ENCODE measurements at regions of chr7 and their contacts with region 1.

Region 1: DNA sequence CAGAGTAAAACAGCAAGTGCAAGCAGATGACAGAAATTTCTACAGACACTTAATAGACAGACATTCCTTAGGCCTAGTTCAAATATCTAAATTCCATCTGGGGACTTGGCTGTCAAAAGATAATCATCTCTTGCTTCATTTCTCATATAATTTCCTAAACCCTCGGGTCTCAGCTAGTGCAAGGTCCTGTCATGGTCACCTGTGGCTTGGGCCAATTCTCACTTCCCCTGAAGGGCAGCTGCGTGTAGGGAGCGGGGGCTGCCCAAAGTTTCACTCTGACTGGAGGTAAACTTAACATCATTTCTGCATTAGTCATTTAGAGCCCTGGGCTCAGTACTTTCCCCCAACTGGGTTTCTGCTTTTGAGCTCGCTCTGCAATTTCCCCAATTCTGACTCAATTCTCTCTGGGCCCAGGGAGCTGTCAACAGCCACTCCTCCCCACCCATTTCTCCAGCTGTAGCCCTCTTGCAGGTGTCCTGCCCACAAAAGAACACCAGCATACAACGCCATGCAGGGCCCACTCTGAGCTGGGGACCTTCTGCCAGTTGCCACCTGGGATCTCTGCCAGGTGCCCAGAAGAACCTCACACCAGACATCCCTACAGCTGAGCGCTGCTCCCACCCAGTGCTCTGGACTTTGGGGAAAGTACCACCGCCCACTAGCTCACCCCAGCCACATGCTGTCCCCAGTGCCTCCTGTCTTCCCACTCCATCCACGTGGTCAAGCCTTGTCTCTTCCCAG is 38.0 kb downstream of the VOPP1 start:
- DNase-seq: peak; percentile 88
- ATAC-seq: peak; percentile 70
- H3K4me3 Mint-ChIP-seq: peak overlapping the region; percentile 37
- H3K27ac Mint-ChIP-seq: peak overlapping the region; percentile 93
- H3K4me1 Mint-ChIP-seq: peaks cover 97% of the 10 kb centered on the region
- H3K27me3 Mint-ChIP-seq: no peaks in the 10 kb centered on the region

Region 2: GRCh38 chr7:54758702-54759592 is 775.4 kb before region 1 on chr7 and contains the start of gene SEC61G:
- CTCF ChIA-PET with region 1: no interaction called
- POLR2A ChIA-PET with region 1: no interaction called
- intact Hi-C with region 1: loop called in 1 of 2 experiments (anchors 5 kb)
- DNase-seq: peak; percentile 97
- ATAC-seq: peak; percentile 91
- H3K4me3 Mint-ChIP-seq: peak within 1 kb of the TSS; percentile 91
- H3K27ac Mint-ChIP-seq: peak within 1 kb of the TSS; percentile 95
- H3K4me1 Mint-ChIP-seq: peaks cover 20% of the 10 kb centered on the region
- H3K27me3 Mint-ChIP-seq: peaks cover 2% of the 10 kb centered on the region
- total RNA-seq, gene SEC61G: 78.4 to 191 TPM

Region 3: DNA sequence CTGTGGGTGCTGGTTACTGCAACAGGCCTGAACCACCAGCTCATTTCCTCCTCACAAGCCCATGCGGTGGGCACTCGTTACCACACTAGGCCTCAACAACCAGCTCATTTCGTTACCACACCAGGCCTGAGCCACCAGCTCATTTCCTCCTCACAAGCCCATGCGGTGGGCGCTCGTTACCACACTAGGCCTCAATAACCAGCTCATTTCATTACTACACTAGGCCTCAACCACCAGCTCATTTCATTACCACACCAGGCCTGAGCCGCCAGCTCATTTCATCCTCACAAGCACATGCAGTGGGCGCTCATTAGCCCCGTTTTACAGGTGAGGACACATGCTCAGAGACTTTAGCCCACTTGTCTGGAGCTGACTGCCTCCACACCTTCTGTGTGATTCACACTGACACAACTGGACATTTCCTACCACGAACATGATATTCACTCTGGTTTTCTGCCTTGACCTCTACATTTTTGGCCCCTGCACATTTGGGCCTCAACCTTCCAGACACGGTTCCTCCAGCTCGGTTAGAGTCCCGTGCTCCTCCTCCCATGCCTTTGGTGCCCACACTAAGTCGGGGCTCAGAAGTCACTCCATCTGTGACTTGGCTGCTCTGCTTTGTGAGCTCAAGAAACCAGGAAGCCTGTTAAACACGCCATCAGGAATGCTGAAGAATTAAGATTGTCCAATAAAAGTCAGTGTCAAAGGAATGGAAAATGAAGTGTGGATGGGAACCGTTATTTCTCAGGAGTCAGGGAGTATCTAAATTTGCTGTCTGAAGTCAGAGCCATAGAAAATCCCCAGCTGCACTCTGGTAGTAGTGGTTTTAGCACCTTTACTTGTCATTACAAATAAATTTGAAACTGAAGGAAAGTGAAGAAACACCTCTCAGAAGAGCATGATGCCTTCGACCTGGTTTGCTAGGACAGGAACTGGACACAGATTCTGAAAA is 225.0 kb before region 1 on chr7:
- CTCF ChIA-PET with region 1: no interaction called
- POLR2A ChIA-PET with region 1: interaction called, 7 read pairs
- intact Hi-C with region 1: loop called (anchors 1 kb)
- DNase-seq: peak; percentile 91
- ATAC-seq: peak; percentile 88
- H3K4me3 Mint-ChIP-seq: no peak overlapping the region
- H3K27ac Mint-ChIP-seq: peak overlapping the region; percentile 84
- H3K4me1 Mint-ChIP-seq: peaks cover 22% of the 10 kb centered on the region
- H3K27me3 Mint-ChIP-seq: peaks cover 12% of the 10 kb centered on the region

Region 4: DNA sequence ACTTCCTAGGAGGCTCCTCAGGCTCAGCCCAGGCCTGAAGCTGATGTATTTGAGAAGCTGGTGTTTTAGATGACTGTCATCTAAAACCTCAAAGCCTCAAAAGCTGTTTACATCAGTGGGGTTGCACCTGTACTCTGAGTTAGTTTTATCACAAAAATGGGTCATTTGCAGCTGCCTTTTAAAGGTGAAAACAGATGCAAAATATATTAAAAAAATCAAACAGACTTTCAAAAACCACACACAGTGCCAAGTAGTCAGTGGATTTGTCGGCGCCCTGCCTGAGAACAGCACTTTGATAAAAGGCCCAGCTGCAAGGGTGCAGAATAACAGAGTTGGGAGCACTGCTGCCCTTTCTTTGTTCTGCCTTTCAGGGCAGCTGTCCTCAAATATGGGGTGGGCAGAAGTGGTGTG is 65.1 kb before region 1 on chr7:
- CTCF ChIA-PET with region 1: interaction called, 3 read pairs
- POLR2A ChIA-PET with region 1: interaction called, 6 read pairs
- intact Hi-C with region 1: loop called in 1 of 2 experiments (anchors 5 kb)
- DNase-seq: peak; percentile 27
- ATAC-seq: peak; percentile 86
- H3K4me3 Mint-ChIP-seq: no peak overlapping the region
- H3K27ac Mint-ChIP-seq: peak overlapping the region; percentile 49
- H3K4me1 Mint-ChIP-seq: peaks cover 63% of the 10 kb centered on the region
- H3K27me3 Mint-ChIP-seq: no peaks in the 10 kb centered on the region

Region 5: DNA sequence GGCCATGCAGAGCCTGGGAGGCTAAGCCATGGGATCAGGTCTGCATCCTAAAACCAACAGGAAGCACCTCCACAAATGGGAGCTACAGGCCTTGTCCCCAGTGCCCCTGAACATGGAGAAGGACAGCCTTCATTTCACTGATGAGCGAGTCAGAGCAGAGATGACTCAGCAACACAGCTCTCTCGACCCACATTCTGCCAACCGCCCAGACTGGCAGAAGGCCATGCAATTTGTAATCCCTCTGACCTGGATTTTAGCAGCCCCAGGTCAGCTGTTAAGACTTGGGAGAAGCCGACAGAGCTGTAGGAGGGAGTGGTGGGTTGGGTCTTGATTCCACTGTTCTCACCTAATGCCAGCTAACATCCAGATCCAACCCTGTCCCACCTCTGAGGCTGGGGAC is 12.5 kb after region 1 on chr7:
- CTCF ChIA-PET with region 1: interaction called, 11 read pairs
- POLR2A ChIA-PET with region 1: interaction called, 7 read pairs
- intact Hi-C with region 1: loop called in 1 of 2 experiments (anchors 1 kb)
- DNase-seq: peak; percentile 77
- ATAC-seq: peak; percentile 95
- H3K4me3 Mint-ChIP-seq: no peak overlapping the region
- H3K27ac Mint-ChIP-seq: no peak overlapping the region
- H3K4me1 Mint-ChIP-seq: peaks cover 79% of the 10 kb centered on the region
- H3K27me3 Mint-ChIP-seq: no peaks in the 10 kb centered on the region

Region 6: DNA sequence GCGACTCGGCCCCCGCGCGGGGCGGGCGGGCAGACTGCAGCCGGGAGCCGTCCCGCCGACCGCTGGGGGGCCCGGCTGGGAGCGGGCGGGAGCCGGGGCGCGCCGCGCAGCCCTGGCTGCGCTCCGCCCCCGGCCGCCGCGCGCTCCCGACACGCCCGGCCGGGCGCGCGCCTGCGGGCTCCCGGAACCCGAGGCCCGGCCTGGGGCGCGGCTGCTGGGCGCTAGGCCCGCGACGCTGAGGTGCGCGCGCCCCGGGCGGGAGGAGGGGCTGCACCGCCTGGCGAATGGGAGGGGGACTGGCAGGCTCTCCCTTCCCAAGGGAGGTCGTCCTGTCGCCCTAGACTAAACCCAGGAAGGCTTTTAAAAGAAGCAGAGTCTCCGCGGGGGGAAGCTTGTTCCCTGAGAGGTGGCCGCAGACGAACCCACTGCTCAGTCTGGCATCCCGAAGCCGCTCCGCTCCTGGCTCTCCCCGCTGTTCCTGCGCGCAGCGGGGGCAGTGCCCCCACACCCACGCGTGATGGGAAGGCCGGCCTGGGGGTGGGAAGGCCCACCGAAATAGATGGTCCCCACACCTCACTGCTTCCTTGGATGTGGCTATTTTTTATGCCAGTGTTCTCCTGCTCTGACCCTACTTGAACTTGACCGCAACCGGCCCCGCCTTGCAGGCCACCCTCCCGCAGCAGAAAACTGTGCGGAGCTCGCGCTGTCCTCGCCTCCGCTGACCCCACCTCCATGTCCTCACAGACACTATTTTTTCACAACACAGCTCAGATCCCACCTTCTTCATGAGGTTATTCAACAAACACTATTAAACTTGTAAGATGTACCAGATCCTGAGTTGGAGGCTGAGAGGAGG is 38.3 kb after region 1 on chr7 and contains the start of gene VOPP1:
- CTCF ChIA-PET with region 1: interaction called, 10 read pairs
- POLR2A ChIA-PET with region 1: interaction called, 67 read pairs
- intact Hi-C with region 1: loop called (anchors 1 kb)
- DNase-seq: peak; percentile 78
- ATAC-seq: peak; percentile 31
- H3K4me3 Mint-ChIP-seq: peak within 1 kb of the TSS; percentile 89
- H3K27ac Mint-ChIP-seq: peak within 1 kb of the TSS; percentile 94
- H3K4me1 Mint-ChIP-seq: peaks cover 67% of the 10 kb centered on the region
- H3K27me3 Mint-ChIP-seq: no peaks in the 10 kb centered on the region
- total RNA-seq, gene VOPP1: 63.7 to 64.2 TPM

Region 7: GRCh38 chr7:55641273-55641691 is 106.9 kb after region 1 on chr7:
- CTCF ChIA-PET with region 1: no interaction called
- POLR2A ChIA-PET with region 1: no interaction called
- intact Hi-C with region 1: no loop called
- DNase-seq: peak; percentile 45
- ATAC-seq: peak; percentile 89
- H3K4me3 Mint-ChIP-seq: no peak overlapping the region
- H3K27ac Mint-ChIP-seq: no peak overlapping the region
- H3K4me1 Mint-ChIP-seq: peaks cover 9% of the 10 kb centered on the region
- H3K27me3 Mint-ChIP-seq: peaks cover 2% of the 10 kb centered on the region

Region 8: GRCh38 chr7:55794527-55794926 is 260.2 kb after region 1 on chr7:
- CTCF ChIA-PET with region 1: no interaction called
- POLR2A ChIA-PET with region 1: no interaction called
- intact Hi-C with region 1: no loop called
- DNase-seq: no peak
- ATAC-seq: no peak
- H3K4me3 Mint-ChIP-seq: no peak overlapping the region
- H3K27ac Mint-ChIP-seq: no peak overlapping the region
- H3K4me1 Mint-ChIP-seq: no peaks in the 10 kb centered on the region
- H3K27me3 Mint-ChIP-seq: no peaks in the 10 kb centered on the region